ENCODE measurements at regions of chr1 and their contacts with region 1.

Region 1: DNA sequence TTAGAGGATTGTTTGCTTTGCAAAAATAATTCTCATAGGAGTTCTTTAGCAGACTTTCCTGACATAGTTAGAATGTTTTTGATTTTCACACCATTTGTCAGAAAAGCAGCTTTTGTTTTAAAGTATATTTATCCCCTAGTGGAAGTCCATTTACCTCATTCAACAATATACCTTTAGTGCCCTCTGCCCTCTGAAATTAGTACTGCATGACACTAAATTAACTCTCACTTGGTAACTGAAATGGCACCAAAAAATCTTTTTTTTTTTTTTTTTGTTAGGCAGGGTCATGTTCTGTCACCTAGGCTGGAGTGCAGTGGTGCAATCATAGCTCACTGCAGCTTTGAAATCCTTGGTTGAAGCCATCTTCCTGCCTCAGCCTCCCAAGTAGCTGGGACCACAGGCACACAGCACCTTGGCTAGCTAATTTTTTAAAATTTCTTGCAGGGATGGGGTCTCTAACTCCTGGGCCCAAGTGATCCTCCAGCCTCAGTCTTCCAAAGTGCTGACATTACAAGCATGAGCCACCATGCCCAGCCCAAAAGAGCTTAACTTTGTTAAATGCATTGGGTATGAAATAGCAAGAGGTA is 13.6 kb downstream of the LRRC42 start:
- DNase-seq: peak; percentile 42
- CTCF ChIP-seq: peak; percentile 55

Region 2: DNA sequence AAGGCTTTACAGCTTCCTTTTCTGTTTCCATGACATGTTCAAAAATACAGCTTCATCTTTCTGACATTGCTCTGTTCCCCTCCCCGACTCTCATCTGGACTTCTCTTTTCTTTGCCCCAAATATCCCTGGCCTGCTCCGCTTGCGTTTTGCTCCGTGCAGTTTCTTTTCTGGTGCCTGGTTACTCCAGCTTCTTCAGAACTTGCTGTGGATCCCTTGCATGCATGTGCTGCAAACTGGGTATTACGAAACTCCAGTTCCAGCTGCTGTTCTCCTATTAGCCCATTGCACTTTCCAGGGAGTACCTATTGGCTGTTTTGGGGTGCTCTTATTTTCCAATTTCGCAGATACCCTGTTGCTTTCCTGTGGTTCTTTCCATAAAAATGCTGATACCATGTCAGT is 111.8 kb before region 1 on chr1:
- CTCF ChIA-PET with region 1: interaction called, 10 read pairs
- POLR2A ChIA-PET with region 1: no interaction called
- DNase-seq: no peak
- CTCF ChIP-seq: no peak

Region 3: GRCh38 chr1:53869454-53870117 is 90.2 kb before region 1 on chr1:
- CTCF ChIA-PET with region 1: interaction called, 21 read pairs
- POLR2A ChIA-PET with region 1: no interaction called
- DNase-seq: peak; percentile 36
- CTCF ChIP-seq: no peak

Region 4: DNA sequence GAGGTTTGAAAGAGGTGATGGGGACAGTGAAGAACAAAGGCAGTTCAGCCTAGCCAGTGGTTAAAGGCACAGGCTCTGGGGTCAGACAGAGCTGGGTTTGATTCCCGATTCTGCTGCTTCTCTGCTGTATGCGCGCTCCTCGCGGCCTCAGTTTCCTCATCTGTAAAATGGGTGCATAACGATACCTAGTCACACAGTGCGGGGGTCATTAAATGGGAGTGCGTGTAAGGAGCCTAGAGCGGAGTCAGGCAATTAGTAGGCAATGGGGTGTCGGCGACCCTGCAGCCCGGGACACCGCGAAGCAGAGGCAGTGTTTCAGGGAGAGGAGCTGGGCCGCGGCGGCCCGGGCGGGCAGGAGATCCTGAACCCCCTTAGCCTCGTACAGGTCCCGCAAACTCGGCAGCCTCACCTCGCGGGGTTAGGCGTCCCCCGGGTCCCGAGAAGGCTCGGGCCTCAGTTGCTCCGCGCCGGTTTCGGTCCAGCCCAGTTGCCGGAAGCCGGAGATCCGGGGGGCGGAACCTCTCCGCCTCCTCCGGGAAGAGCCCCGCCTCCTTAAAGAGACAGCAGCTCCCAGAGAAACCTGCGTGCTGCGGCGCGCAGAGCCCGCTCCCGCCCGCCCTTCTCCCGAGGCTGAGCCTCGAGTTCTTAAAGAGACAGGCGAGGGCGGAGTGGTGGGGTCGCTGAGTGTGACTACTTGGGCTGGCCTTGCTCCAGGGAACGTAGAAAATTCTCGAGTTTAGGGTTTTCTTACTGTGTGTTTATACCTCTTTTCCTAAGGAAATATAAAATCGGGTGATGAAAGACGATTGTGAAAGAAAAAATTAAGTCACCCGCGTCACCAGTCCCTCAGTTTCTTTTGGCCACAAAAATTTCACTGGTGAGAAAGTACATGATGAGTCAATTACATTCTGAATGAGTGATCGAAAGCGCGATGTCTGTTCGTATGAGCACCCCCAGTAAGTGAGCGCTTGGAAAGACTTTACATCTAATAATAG is 70.2 kb before region 1 on chr1 and contains the start of gene YIPF1:
- CTCF ChIA-PET with region 1: interaction called, 10 read pairs
- POLR2A ChIA-PET with region 1: no interaction called
- DNase-seq: peak; percentile 93
- CTCF ChIP-seq: no peak

Region 5: DNA sequence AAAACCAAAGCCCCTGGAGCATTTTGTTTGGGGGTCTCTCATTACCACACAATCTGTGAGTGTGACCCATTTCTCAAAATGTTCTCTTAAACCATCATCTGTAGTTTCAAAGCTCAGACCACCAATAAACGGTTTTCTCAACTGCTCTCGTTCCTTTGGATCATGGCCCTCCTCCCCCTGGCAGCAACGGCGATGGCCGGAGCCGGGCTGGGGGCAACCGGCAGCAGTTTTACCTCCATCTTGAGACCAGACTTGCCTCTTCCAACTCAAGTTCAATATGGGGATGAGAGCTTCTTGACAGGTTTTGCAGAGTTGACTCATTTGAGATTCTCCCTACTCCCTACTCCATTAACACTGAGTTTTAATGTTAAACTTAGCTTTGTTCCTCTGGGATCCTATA is 16.1 kb after region 1 on chr1:
- CTCF ChIA-PET with region 1: interaction called, 22 read pairs
- POLR2A ChIA-PET with region 1: no interaction called
- DNase-seq: no peak
- CTCF ChIP-seq: no peak